GM12878 (cell line): ENCODE measurements at regions of chr4 and their contacts with region 1.

Region 1: GRCh38 chr4:56843421-56843899 is 22.0 kb upstream of the SPINK2 start:
- DNase-seq: no peak
- ATAC-seq: no peak
- H3K4me3 ChIP-seq: no peak overlapping the region
- H3K27ac ChIP-seq: no peak overlapping the region
- H3K4me1 ChIP-seq: no peaks in the 10 kb centered on the region
- H3K27me3 ChIP-seq: no peaks in the 10 kb centered on the region
- CTCF ChIP-seq: no peak
- EP300 ChIP-seq: no peak
- POLR2A ChIP-seq: no peak
- RAD21 ChIP-seq: no peak

Region 2: DNA sequence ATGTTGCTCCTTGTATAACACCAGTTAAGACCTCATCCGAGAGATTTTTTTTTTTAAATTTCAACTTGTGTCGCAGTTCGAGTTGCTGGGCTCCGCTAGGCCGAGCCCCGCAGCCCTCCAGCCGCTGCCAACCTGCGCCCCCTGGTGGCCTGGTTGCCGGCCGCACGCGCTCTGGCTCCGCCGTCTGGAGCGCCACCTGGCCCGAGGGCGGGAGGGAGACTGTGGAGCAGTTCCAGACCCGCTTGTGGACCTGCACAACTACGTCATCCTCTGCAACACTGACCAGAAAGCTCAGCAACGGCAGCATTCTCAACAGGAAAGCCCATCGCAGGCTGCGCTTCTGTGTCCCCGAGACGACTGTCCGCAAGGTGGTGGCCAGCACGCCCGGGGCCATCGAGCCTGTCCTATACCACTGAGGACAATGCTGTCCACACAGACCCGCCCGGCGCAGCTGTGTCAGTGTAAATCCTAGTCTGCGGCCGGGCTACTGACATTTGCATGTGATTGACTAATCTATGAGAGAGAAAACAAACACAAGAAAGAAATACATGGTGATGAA is 298.8 kb before region 1 on chr4:
- CTCF ChIA-PET with region 1: no interaction called
- POLR2A ChIA-PET with region 1: interaction called, 6 read pairs
- RAD21 ChIA-PET with region 1: no interaction called
- SMC1A ChIA-PET with region 1: no interaction called
- in situ Hi-C with region 1: no loop called
- intact Hi-C with region 1: loop called (anchors 5 kb)
- DNase-seq: peak; percentile 17
- ATAC-seq: peak; percentile 100
- H3K4me3 ChIP-seq: no peak overlapping the region
- H3K27ac ChIP-seq: no peak overlapping the region
- H3K4me1 ChIP-seq: no peaks in the 10 kb centered on the region
- H3K27me3 ChIP-seq: no peaks in the 10 kb centered on the region
- CTCF ChIP-seq: peak; percentile 94 to 99 (median 97); a peak in 5 of 6 replicates
- EP300 ChIP-seq: no peak
- POLR2A ChIP-seq: no peak
- RAD21 ChIP-seq: peak; percentile 78

Region 3: DNA sequence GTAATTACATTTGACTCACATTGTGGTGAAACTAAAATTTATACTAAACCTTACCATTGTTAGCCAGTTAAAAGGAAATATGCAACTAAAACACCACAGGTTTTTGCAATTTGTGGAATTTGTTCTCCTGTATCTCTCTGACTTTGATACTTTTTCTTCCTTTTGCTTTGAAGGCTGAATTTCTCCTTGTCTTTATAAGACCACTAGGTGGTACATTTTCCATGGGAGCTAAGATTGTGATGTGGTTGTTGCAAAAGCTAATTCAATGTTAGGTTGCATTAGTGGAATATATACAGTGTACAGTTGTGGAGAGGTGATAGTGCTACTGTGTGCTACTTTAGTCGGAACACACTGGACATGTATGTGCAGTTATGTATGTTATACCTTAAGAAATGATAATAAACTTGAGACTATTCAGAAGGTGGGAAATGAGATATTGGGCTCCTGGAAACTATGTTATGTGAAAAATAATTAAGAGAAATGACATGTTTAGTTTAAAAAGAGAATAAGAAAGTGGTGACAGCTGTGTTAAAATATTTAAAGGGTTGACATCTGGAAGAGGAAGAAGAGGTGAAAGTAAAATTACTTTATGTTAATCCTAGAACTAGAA is 267.5 kb before region 1 on chr4:
- CTCF ChIA-PET with region 1: interaction called, 21 read pairs
- POLR2A ChIA-PET with region 1: no interaction called
- RAD21 ChIA-PET with region 1: interaction called, 3 read pairs
- SMC1A ChIA-PET with region 1: no interaction called
- in situ Hi-C with region 1: no loop called
- intact Hi-C with region 1: loop called (anchors 10 kb)
- DNase-seq: no peak
- ATAC-seq: no peak
- H3K4me3 ChIP-seq: no peak overlapping the region
- H3K27ac ChIP-seq: no peak overlapping the region
- H3K4me1 ChIP-seq: no peaks in the 10 kb centered on the region
- H3K27me3 ChIP-seq: no peaks in the 10 kb centered on the region
- CTCF ChIP-seq: peak; percentile 18 to 31 (median 23); a peak in 3 of 6 replicates
- EP300 ChIP-seq: no peak
- POLR2A ChIP-seq: no peak
- RAD21 ChIP-seq: peak; percentile 59

Region 4: DNA sequence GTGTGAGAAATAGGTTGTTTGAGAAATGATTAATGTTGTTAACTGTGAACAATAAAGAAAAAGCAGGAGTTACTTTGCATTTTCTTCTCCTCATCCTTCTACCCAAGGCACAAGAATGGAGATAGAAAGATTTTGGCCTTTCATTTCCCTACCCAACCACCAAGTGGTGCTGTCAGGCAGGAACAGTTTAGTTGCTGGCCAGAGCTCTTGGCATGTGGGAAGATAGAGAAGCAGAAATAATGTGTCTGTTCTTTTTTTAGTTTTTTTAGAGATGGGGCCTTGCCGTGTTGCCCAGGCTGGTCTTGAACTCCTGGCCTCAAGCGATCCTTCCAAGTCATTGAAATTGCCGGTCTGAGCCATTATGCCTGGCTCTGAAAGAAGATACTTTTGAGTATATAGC is 175.2 kb before region 1 on chr4:
- CTCF ChIA-PET with region 1: no interaction called
- POLR2A ChIA-PET with region 1: no interaction called
- RAD21 ChIA-PET with region 1: no interaction called
- SMC1A ChIA-PET with region 1: no interaction called
- in situ Hi-C with region 1: no loop called
- intact Hi-C with region 1: loop called (anchors 5 kb)
- DNase-seq: no peak
- ATAC-seq: no peak
- H3K4me3 ChIP-seq: no peak overlapping the region
- H3K27ac ChIP-seq: no peak overlapping the region
- H3K4me1 ChIP-seq: no peaks in the 10 kb centered on the region
- H3K27me3 ChIP-seq: no peaks in the 10 kb centered on the region; a peak in 1 of 4 replicates
- CTCF ChIP-seq: peak; percentile 27 to 33 (median 29); a peak in 3 of 6 replicates
- EP300 ChIP-seq: no peak
- POLR2A ChIP-seq: no peak
- RAD21 ChIP-seq: peak; percentile 69